Breast epithelium (tissue), 4 donors: ENCODE measurements at regions of chr1 and their contacts with region 1.

Region 1: GRCh38 chr1:76006234-76006633 is 68.3 kb upstream of the ST6GALNAC3 start:
- DNase-seq: no peak
- H3K4me3 ChIP-seq: no peak overlapping the region
- H3K27ac ChIP-seq: no peak overlapping the region
- H3K4me1 ChIP-seq: no peaks in the 10 kb centered on the region
- H3K27me3 ChIP-seq: no peaks in the 10 kb centered on the region
- CTCF ChIP-seq: no peak
- POLR2A ChIP-seq: no peak

Region 2: DNA sequence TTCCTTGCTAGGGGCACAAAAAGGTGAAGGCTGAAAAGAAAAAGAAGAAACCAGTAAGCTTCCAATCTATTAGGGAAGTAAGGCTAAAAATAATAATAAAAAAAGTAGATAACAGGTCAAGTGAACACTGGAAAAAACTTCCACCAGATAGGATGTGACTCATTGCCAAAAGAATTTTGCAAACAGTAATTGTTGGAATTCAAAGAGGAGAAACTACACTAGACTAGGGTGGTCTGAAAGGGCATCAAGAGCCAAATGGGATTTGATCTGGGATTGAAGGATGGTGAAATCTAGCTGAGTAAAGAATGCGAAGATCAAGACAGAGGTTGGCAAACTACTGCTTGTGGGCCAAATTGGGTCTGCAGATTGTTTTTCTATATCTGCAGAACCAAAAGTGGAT is 62.3 kb after region 1 on chr1:
- intact Hi-C with region 1: loop called (anchors 2 kb)
- DNase-seq: no peak
- H3K4me3 ChIP-seq: no peak overlapping the region
- H3K27ac ChIP-seq: peak overlapping the region in 1 of 2 donors; percentile 33
- H3K4me1 ChIP-seq: no peaks in the 10 kb centered on the region
- H3K27me3 ChIP-seq: no peaks in the 10 kb centered on the region
- CTCF ChIP-seq: no peak
- POLR2A ChIP-seq: no peak

Region 3: GRCh38 chr1:77068013-77068412 is 1061.8 kb after region 1 on chr1:
- intact Hi-C with region 1: no loop called
- DNase-seq: no peak
- H3K4me3 ChIP-seq: no peak overlapping the region
- H3K27ac ChIP-seq: no peak overlapping the region
- H3K4me1 ChIP-seq: no peaks in the 10 kb centered on the region
- H3K27me3 ChIP-seq: no peaks in the 10 kb centered on the region
- CTCF ChIP-seq: no peak
- POLR2A ChIP-seq: no peak

Region 4: DNA sequence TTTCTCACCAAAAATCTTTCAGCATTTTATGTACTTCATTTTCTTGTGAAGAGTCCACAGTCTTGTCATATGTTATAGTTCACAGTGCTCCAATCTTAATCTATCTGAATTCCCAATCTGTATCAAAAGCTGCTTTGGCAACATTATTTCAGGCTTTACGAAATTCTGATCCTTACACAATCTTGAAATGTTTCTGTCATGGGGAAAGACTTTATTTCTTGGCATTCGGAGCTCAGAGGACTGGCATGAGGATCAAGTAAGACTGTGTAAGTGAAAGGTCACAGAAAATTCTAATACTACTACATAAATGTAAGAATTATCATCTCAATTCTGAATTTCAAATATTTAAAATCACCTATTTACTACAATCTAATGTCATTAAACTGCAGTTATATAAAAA is 1751.4 kb after region 1 on chr1:
- intact Hi-C with region 1: no loop called
- DNase-seq: no peak
- H3K4me3 ChIP-seq: peak overlapping the region in 2 of 3 donors; percentile 96 to 98
- H3K27ac ChIP-seq: no peak overlapping the region
- H3K4me1 ChIP-seq: no peaks in the 10 kb centered on the region
- H3K27me3 ChIP-seq: no peaks in the 10 kb centered on the region
- CTCF ChIP-seq: no peak
- POLR2A ChIP-seq: no peak